Activated CD4-positive, alpha-beta memory T cell treated with anti-CD3 and anti-CD28 coated beads, Interleukin-2, amount 10 ng/mL, durations not matched to agents 7 days and 5 days (primary cell): ENCODE measurements at regions of chr9 and their contacts with region 1.

Region 1: DNA sequence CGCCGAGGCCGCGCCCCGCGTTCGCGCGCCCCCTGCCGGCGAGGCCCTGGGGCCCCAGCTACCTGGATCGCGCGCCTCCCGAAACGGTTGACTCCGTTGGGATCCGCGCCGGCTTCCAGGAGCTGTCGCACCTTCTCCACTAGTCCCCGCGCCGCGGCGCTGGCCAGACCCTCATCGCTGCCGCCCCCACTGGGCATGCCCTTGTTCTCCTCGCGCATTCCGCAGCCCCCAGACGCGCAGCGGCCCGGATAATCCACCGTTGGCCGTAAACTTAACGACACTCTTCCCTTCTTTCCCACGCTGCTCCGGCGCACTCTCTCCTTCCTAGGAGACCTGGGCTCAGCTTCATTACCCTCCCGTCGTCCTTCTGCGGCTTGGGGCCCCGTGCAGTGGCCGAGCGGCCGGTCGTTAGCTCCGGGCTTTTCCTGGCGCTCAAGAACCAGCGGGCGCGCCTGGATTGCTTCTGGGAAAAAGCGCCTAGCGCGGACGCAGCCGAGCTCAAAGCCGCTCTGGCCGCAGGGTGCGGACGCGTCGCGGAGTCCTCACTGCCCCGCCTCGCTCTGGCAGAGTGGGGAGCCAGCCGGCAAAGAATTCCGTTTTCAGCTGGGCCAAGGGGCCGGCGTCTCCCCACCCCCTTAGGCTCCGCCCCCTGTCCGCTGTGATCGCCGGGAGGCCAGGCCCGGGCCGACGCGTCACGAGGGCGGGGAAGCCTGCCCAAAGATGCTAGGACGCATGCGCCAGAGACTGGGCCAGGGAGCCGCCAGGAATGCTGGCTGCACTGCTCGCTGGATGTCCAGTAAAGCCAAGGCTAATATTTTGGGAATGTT is at the start of gene CDKN2B:
- DNase-seq: peak; percentile 79
- H3K4me3 Mint-ChIP-seq: peak within 1 kb of the TSS; percentile 82
- H3K27ac Mint-ChIP-seq: no peak within 1 kb of the TSS
- H3K4me1 Mint-ChIP-seq: peaks cover 33% of the 10 kb centered on the region
- H3K27me3 Mint-ChIP-seq: peaks cover 50% of the 10 kb centered on the region
- total RNA-seq, gene CDKN2B: 2.5 to 3.4 TPM

Region 2: GRCh38 chr9:21974548-21975409 is 34.2 kb before region 1 on chr9:
- CTCF ChIA-PET with region 1: interaction called, 28 read pairs
- POLR2A ChIA-PET with region 1: no interaction called
- DNase-seq: peak; percentile 47
- H3K4me3 Mint-ChIP-seq: peak overlapping the region; percentile 63
- H3K27ac Mint-ChIP-seq: peak overlapping the region; percentile 41
- H3K4me1 Mint-ChIP-seq: peaks cover 34% of the 10 kb centered on the region
- H3K27me3 Mint-ChIP-seq: peaks cover 88% of the 10 kb centered on the region

Region 3: GRCh38 chr9:22022396-22022795 is 13.4 kb after region 1 on chr9:
- CTCF ChIA-PET with region 1: interaction called, 13 read pairs
- POLR2A ChIA-PET with region 1: no interaction called
- DNase-seq: no peak
- H3K4me3 Mint-ChIP-seq: no peak overlapping the region
- H3K27ac Mint-ChIP-seq: no peak overlapping the region
- H3K4me1 Mint-ChIP-seq: peaks cover 9% of the 10 kb centered on the region
- H3K27me3 Mint-ChIP-seq: peaks cover 42% of the 10 kb centered on the region

Region 4: DNA sequence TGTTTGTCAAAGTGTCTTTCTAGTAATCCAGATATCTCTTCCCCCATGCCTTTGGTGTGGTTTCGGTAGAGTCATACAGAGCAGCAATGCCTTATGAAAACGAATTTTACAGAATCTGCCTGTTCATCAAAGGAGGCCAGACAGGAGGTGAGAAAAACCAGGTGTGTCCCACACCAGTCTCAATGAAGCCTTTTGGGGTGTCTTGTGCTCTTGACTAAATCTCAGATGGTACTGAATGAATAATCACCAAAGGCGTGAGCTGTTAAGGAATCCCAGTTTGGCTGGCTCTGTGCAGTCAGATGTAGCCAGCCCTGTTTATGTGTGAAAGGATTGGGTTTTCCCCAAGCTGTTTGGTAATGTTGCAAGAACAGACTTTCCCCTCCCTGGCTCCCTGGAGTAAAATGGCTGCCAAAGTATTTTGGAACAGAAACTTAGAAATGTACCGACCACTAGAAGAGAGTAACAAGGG is 71.0 kb after region 1 on chr9:
- CTCF ChIA-PET with region 1: interaction called, 23 read pairs
- POLR2A ChIA-PET with region 1: interaction called, 8 read pairs
- DNase-seq: peak; percentile 57
- H3K4me3 Mint-ChIP-seq: peak overlapping the region; percentile 12
- H3K27ac Mint-ChIP-seq: peak overlapping the region; percentile 86
- H3K4me1 Mint-ChIP-seq: peaks cover 46% of the 10 kb centered on the region
- H3K27me3 Mint-ChIP-seq: peaks cover 36% of the 10 kb centered on the region

Region 5: GRCh38 chr9:22211593-22212360 is 202.8 kb after region 1 on chr9:
- CTCF ChIA-PET with region 1: no interaction called
- POLR2A ChIA-PET with region 1: no interaction called
- DNase-seq: no peak
- H3K4me3 Mint-ChIP-seq: no peak overlapping the region
- H3K27ac Mint-ChIP-seq: no peak overlapping the region
- H3K4me1 Mint-ChIP-seq: peaks cover 33% of the 10 kb centered on the region
- H3K27me3 Mint-ChIP-seq: peaks cover 7% of the 10 kb centered on the region

Region 6: GRCh38 chr9:22238809-22239684 is 230.1 kb after region 1 on chr9:
- CTCF ChIA-PET with region 1: interaction called, 16 read pairs
- POLR2A ChIA-PET with region 1: no interaction called
- DNase-seq: no peak
- H3K4me3 Mint-ChIP-seq: no peak overlapping the region
- H3K27ac Mint-ChIP-seq: no peak overlapping the region
- H3K4me1 Mint-ChIP-seq: peaks cover 28% of the 10 kb centered on the region
- H3K27me3 Mint-ChIP-seq: peaks cover 41% of the 10 kb centered on the region